Activated naive CD4-positive, alpha-beta T cell treated with anti-CD3 and anti-CD28 coated beads for 36 hours (primary cell): ENCODE measurements at regions of chr1 and their contacts with region 1.

Region 1: DNA sequence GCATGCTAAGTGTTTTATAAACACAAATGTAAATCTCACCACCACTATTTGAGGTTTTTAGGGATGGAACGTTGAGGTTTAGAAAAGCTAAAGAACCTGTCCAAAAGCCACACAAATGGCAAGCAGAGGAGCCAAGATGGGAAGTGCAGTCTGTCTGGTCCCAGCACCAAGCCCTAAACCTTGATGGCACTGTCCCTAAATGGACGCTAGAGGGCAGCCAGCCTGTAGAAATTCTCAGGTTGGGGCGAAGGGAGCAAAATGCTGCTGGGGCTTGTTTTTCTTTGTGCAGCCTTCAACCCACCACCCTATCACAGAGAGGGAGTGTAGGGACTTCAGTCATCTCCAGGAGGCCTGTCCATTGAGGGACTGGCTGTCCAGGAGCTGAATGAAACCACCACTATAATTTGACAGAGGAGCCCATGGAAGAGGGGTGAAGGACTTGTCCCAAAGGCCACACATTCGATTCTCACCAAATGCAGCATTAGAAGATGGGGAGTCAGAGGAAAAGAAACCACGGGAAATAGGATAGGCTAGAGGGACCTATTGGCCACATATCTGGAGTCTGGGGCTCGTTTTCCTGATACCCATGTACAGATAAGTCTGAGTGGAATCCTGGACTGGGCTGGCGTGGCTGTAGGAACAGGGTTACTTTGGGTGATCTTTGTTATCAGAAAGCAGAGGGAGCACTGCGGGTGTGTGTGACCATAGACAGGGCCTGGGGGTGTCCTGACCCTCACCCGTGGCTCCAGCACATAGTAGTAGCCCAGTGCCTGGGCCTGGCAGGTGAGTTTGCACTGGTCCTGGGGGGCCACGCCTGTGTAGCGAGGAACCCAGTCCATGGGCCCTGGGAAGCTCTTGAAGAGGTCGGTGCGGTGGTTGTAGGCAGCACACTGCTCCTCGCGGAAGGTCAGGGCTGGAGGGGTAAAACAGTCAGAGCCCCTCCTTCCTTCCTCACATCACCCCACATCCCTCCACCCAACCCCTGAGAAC is 6.1 kb downstream of the ADAMTS4 start:
- DNase-seq: peak; percentile 84
- H3K4me3 Mint-ChIP-seq: no peak overlapping the region
- H3K27ac Mint-ChIP-seq: peak overlapping the region; percentile 51
- H3K4me1 Mint-ChIP-seq: peaks cover 34% of the 10 kb centered on the region
- H3K27me3 Mint-ChIP-seq: no peaks in the 10 kb centered on the region

Region 2: GRCh38 chr1:161209790-161210409 is 17.1 kb after region 1 on chr1:
- CTCF ChIA-PET with region 1: interaction called, 69 read pairs
- intact Hi-C with region 1: no loop called
- DNase-seq: peak; percentile 86
- H3K4me3 Mint-ChIP-seq: no peak overlapping the region
- H3K27ac Mint-ChIP-seq: peak overlapping the region; percentile 50
- H3K4me1 Mint-ChIP-seq: peaks cover 37% of the 10 kb centered on the region
- H3K27me3 Mint-ChIP-seq: no peaks in the 10 kb centered on the region

Region 3: DNA sequence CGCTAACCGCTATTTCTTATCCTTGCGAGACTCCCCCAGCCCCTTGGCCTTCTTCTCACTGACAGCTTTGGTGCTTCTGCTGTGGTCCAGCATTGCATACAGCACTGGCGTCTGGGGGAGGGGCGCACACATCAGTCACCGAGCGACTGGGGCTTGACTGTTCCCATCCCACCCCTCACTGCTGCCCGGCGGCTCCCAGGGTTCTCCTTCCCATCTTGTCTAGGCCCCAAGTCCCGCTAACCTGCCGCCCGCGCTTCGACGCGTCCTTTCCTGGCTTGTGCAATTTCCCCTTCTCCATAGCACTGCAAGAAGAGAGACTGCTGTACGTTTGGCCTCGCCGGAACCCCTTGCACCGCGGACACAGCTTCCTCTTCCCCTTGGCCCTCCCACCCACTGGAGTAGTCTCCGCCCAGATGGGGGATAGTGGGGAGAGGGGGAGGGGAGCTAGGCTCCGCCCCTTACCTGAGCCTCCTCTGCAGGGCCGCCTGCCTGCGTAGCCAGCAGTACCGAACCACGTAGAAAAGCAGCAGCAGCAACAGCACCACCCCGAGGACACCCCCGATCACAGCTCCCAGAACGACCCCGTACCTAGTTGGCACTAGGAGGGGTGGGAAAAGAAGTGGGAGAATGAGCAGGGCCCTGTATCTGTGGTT is 113.2 kb after region 1 on chr1:
- CTCF ChIA-PET with region 1: interaction called, 3 read pairs
- intact Hi-C with region 1: loop called (anchors 1 kb)
- DNase-seq: peak; percentile 89
- H3K4me3 Mint-ChIP-seq: peak overlapping the region; percentile 96
- H3K27ac Mint-ChIP-seq: peak overlapping the region; percentile 83
- H3K4me1 Mint-ChIP-seq: peaks cover 33% of the 10 kb centered on the region
- H3K27me3 Mint-ChIP-seq: no peaks in the 10 kb centered on the region